Ascending aorta (tissue), 2 donors: ENCODE measurements at regions of chr2 and their contacts with region 1.

Region 1: DNA sequence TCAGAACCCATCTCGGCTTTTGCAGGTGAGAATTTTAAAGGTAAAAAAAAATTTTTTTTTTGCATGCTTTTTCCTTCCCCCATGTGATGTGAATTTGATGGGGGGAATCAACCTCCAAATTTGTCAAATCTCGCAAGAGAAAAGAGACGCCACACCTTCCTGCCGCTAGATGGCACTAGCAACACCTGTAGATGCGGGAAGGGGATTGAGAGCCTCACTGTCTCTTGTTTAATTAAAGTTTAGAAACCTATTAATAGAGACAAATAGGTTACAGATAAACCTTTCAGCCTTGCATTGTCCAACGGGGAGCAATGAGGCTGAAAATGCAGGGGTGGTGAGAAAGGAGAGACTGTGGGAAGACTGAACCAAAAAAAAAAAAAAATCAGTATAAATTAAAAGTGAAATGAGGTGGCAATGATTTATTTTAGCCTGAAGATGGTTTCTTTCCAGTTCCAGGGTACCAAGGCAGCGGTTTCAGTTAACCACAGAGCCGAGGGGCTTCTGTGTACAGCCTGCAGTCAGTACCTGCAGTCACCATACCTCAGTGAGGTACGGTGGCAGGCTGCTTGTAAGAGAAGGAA is 84.6 kb downstream of the NRP2 start:
- DNase-seq: peak in 1 of 2 donors; percentile 71
- H3K4me3 ChIP-seq: no peak overlapping the region
- H3K27ac ChIP-seq: no peak overlapping the region
- H3K4me1 ChIP-seq: peaks cover 3 to 4% of the 10 kb centered on the region in 2 donors
- H3K27me3 ChIP-seq: no peaks in the 10 kb centered on the region
- CTCF ChIP-seq: peak; percentile 44 to 91 (median 82)

Region 2: GRCh38 chr2:205885492-205886099 is 118.7 kb after region 1 on chr2:
- intact Hi-C with region 1: loop called (anchors 5 kb)
- DNase-seq: peak in 1 of 2 donors; percentile 80
- H3K4me3 ChIP-seq: no peak overlapping the region
- H3K27ac ChIP-seq: no peak overlapping the region
- H3K4me1 ChIP-seq: peaks cover 0 to 2% of the 10 kb centered on the region in 2 donors
- H3K27me3 ChIP-seq: no peaks in the 10 kb centered on the region
- CTCF ChIP-seq: peak; percentile 67 to 87 (median 70)

Region 3: DNA sequence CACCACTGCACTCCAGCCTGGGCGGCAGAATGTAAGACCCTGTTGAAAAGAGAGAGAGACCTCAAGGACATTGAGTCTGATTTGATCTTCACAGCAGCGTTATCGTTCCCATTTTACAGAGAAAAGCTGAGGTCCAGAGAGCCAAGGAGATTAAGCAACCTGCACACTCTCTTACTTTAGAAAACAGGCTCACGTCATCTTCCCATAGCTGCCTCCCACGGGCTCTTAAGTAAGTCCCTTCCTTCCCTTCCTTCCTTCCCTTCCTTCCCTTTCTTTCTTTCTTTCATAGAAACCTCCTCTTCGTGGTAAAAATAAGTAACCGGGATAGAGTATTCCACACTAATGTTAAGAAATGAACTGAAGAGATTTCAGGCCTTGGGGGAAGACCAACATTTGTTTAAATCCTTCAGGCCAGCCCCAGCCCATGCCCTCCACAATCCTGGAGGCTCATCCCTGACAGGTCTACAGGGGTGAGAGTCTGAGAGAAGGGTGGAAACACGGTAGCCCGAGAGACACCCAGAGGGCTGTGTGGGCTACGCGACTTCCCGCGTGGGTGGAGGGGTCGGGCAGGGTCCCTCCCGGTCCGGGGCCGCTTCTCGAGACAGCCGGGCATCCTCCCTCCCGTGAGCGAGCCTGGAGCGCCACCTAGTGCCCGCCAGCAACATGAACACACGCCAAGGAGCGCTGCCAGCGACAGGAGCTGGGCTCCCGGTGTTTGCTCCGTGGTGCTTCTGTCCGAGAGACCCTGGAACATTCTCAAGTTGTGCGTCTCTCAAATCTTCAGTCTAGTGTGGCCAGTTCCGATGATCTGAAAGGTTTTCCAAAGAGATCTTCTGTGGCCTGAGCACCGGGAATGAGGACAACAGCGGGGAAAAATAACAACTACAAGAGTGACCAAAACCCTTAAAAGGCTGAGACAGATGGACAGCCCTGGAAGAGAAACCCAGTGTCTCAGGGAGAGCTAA is 158.8 kb after region 1 on chr2:
- intact Hi-C with region 1: loop called (anchors 2 kb)
- DNase-seq: peak in 1 of 2 donors; percentile 72
- H3K4me3 ChIP-seq: peak overlapping the region; percentile 26 to 32
- H3K27ac ChIP-seq: no peak overlapping the region
- H3K4me1 ChIP-seq: peaks cover 0 to 6% of the 10 kb centered on the region in 2 donors
- H3K27me3 ChIP-seq: no peaks in the 10 kb centered on the region
- CTCF ChIP-seq: peak; percentile 89 to 94 (median 93)

Region 4: DNA sequence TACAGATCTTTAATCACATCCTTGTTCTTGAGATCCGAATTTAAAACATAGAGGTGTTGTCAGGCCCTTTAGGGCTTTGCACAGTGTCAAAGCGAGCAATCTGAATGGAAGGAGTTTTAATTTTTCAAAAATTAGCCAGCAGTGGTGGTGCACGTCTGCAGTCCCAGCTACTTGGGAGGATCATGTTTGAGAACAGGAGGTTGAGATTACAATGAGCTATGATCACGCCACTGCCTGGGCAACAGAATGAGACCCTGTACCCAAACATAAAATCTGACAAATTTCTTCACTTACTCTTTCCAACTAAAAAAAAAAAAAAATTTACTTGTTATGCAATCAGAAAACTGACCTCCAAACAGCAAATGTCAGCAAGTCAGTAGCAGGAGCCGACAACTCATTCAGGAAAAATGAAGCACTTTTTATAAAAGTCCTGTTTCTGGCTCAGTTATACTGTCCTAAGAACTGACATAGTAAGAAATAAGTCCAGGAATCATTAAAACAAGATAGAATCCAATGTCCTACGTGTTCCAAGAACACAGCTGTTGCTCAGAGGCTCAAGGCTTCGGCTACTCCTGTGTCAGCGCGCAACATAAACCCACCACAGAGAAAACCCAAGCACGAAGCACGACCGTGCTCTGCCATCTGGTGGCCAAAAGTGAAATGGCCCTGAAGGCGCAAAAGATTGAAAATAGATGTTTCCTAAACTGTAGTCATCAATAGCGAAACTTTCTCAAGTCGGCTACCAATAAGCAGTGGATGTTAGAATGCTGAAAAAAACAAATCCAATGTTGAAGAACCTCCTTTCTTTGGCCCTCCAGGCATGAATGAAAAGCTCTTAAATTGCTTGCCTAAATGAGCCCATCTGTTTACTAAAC is 181.0 kb after region 1 on chr2:
- intact Hi-C with region 1: loop called (anchors 5 kb)
- DNase-seq: peak in 1 of 2 donors; percentile 81
- H3K4me3 ChIP-seq: peak overlapping the region; percentile 31 to 41
- H3K27ac ChIP-seq: peak overlapping the region in 1 of 2 donors; percentile 67
- H3K4me1 ChIP-seq: peaks cover 4 to 5% of the 10 kb centered on the region in 2 donors
- H3K27me3 ChIP-seq: no peaks in the 10 kb centered on the region
- CTCF ChIP-seq: peak; percentile 66 to 94 (median 82)

Region 5: GRCh38 chr2:206368933-206369569 is 602.2 kb after region 1 on chr2:
- intact Hi-C with region 1: no loop called
- DNase-seq: no peak
- H3K4me3 ChIP-seq: no peak overlapping the region
- H3K27ac ChIP-seq: peak overlapping the region in 1 of 2 donors; percentile 31
- H3K4me1 ChIP-seq: no peaks in the 10 kb centered on the region
- H3K27me3 ChIP-seq: no peaks in the 10 kb centered on the region
- CTCF ChIP-seq: no peak